Testis (tissue), 5 donors: ENCODE measurements at regions of chr13 and their contacts with region 1.

Region 1: DNA sequence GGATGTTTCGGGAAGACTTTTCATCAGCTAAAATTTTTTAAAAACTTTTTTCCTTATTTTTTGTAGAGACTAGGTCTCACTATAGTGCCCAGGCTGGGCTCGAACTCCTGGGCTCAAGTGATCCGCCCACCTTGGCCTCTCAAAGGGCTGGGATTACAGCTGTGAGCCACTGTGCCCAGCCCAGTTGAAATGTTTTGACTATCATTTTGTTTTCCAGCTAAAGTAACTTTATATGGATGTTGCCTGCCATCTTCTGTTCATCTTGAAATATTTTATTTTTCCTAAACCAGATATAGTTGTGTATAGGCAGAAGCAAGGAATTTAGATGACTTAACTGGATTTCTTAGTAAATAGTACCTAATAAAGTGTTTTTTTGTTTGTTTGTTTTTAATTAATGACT is 7.0 kb downstream of the CAB39L start:
- DNase-seq: peak; percentile 43
- H3K4me3 ChIP-seq: no peak overlapping the region
- H3K27ac ChIP-seq: no peak overlapping the region
- H3K4me1 ChIP-seq: peaks cover 4% of the 10 kb centered on the region
- H3K27me3 ChIP-seq: no peaks in the 10 kb centered on the region
- CTCF ChIP-seq: peak in 2 of 3 experiments; percentile 25 to 26
- POLR2A ChIP-seq: no peak

Region 2: DNA sequence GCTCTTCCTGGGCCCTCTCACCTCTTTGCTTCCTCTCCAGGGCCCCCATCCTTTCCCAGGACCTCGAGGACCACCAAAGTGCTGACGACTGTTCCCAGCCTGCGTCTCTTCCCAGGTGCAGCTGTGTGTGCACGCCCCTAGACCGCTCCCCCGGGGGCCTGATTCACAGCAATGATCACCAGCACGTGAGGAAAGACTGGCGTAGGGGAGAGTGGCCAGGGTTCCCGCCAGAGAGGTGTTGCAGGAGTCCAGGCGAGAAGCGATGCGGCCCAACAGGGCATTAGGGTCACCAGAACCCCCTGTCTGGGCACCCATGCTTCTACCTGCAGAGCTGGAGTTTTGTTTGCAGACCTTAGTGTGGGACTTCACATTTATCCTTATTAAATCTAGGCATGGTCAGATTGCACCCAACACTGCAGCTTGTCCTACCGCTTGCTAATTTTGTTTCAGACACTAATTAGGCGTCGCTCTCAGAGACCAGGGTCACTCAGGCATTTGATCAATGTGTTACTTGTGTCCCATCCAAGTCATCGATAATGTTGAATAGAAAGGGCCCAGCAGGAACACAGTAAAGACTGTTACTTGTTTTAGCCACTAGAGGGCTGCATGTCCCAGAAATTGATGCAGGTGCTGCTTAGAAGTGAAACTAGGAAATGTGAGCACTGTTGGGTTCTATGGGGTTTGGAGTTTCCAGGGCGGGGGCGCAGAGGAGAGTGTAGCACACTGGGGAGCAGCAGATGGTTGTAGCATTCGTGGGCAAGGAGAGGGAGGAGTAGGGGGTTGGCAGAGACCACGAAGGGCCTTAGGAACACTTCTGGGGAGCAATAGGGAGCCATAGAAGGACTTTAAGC is 135.9 kb before region 1 on chr13:
- intact Hi-C with region 1: loop called (anchors 5 kb)
- DNase-seq: peak; percentile 66
- H3K4me3 ChIP-seq: no peak overlapping the region
- H3K27ac ChIP-seq: peak overlapping the region; percentile 74 to 77
- H3K4me1 ChIP-seq: peaks cover 57% of the 10 kb centered on the region
- H3K27me3 ChIP-seq: no peaks in the 10 kb centered on the region
- CTCF ChIP-seq: peak; percentile 81 to 93 (median 85)
- POLR2A ChIP-seq: no peak